IMR-90 (cell line): ENCODE measurements at regions of chr14 and their contacts with region 1.

Region 1: GRCh38 chr14:46344327-46344937 is 307.1 kb downstream of the RPL10L start:
- DNase-seq: no peak
- ATAC-seq: no peak
- H3K4me3 ChIP-seq: no peak overlapping the region
- H3K27ac ChIP-seq: no peak overlapping the region
- H3K4me1 ChIP-seq: no peaks in the 10 kb centered on the region
- H3K27me3 ChIP-seq: no peaks in the 10 kb centered on the region
- CTCF ChIP-seq: peak; percentile 40
- POLR2A ChIP-seq: no peak
- RAD21 ChIP-seq: peak; percentile 39

Region 2: DNA sequence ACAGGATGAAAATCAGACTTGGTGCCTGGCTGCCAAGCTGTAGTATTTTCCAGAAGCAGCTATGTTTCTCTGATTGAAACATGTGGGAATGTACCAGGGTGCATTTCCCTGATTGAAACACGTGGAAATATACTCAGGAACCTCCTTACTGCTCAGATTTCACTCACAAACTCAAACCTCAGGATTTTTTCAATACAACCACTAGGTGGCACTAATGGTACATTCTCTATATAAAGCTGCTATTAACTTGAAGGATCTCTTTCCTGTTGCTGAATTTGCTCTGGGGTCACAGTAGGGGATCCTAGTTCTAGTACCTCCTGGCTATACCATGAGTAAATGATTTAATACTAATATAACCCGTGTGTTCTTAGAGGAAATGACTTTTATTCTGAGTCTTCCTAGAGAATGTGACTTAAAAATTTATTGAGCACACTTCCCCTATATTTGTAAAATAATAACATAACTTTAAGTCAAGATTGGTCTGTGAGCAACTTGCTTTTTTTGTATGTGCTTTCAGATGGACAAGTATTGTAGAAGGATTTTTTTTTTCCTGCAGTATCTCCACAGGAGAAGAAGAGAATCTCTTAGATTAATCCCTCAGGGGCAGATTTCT is 917.7 kb before region 1 on chr14:
- CTCF ChIA-PET with region 1: no interaction called
- POLR2A ChIA-PET with region 1: no interaction called
- dilution Hi-C with region 1: no loop called
- in situ Hi-C with region 1: no loop called
- intact Hi-C with region 1: loop called (anchors 10 kb)
- DNase-seq: peak; percentile 34
- ATAC-seq: peak; percentile 61
- H3K4me3 ChIP-seq: no peak overlapping the region
- H3K27ac ChIP-seq: no peak overlapping the region
- H3K4me1 ChIP-seq: no peaks in the 10 kb centered on the region
- H3K27me3 ChIP-seq: no peaks in the 10 kb centered on the region
- CTCF ChIP-seq: peak; percentile 59
- POLR2A ChIP-seq: no peak
- RAD21 ChIP-seq: peak; percentile 56

Region 3: GRCh38 chr14:46048127-46048526 is 296.3 kb before region 1 on chr14:
- CTCF ChIA-PET with region 1: no interaction called
- POLR2A ChIA-PET with region 1: no interaction called
- dilution Hi-C with region 1: no loop called
- in situ Hi-C with region 1: no loop called
- intact Hi-C with region 1: loop called (anchors 10 kb)
- DNase-seq: peak; percentile 18
- ATAC-seq: no peak
- H3K4me3 ChIP-seq: no peak overlapping the region
- H3K27ac ChIP-seq: no peak overlapping the region
- H3K4me1 ChIP-seq: no peaks in the 10 kb centered on the region
- H3K27me3 ChIP-seq: no peaks in the 10 kb centered on the region
- CTCF ChIP-seq: peak; percentile 46
- POLR2A ChIP-seq: no peak
- RAD21 ChIP-seq: peak; percentile 65

Region 4: DNA sequence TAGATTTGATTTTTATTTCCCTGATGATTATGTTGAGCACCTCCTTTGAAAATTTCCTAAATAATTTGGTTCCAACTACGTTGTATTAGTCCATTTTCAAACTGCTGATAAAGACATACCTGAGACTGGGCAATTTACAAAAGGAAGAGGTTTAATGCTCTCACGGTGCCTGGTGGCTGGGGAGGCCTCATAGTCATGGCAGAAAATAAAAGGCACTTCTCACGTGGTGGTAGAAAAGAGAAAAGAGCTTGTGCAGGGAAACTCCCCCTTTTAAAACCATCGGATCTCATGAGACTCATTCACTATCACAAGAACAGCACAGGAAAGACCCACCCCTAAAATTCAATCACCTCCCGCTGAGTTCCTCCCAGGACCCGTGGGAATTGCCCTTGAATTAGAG is 65.1 kb before region 1 on chr14:
- CTCF ChIA-PET with region 1: no interaction called
- POLR2A ChIA-PET with region 1: no interaction called
- dilution Hi-C with region 1: no loop called
- in situ Hi-C with region 1: no loop called
- intact Hi-C with region 1: no loop called
- DNase-seq: no peak
- ATAC-seq: no peak
- H3K4me3 ChIP-seq: no peak overlapping the region
- H3K27ac ChIP-seq: no peak overlapping the region
- H3K4me1 ChIP-seq: no peaks in the 10 kb centered on the region
- H3K27me3 ChIP-seq: no peaks in the 10 kb centered on the region
- CTCF ChIP-seq: no peak
- POLR2A ChIP-seq: no peak
- RAD21 ChIP-seq: no peak